ENCODE measurements at regions of chr5 and their contacts with region 1.

Region 1: GRCh38 chr5:40688127-40688761 is 8.5 kb downstream of the PTGER4 start:
- DNase-seq: peak; percentile 78 to 91 (median 81)
- ATAC-seq: peak; percentile 99
- H3K4me3 ChIP-seq: no peak overlapping the region
- H3K27ac ChIP-seq: no peak overlapping the region
- H3K4me1 ChIP-seq: no peaks in the 10 kb centered on the region
- H3K27me3 ChIP-seq: no peaks in the 10 kb centered on the region
- CTCF ChIP-seq: peak; percentile 86 to 96 (median 87)
- EP300 ChIP-seq: no peak
- POLR2A ChIP-seq: no peak
- RAD21 ChIP-seq: peak; percentile 94 to 97

Region 2: DNA sequence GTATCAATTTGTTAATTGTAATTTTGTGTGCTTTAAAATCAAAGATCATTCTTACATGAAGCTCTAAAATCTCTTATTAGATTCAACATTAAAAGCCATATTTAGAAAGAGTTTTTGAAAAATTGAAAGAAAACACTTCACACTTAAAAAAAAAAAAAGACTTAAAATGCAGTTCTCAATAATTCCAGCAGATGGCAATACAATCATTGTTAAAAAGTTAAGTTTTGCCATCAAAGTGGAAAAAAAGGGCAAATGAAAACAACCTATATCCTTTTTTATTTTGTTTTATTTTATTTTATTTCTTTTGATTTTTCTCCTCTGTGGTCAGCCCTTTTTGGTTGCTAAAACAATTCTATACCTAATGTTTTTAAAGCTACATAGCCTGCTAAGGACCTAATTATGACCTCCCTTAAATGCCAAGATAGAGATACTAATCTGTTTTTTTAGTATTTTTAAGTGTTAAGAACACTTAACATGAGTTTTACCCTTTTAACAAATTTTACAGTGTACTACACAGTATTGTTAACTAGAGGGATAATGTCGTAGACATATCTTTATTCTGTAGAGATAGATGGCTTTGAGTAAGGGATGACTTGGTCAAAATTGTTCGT is 1109.3 kb before region 1 on chr5:
- CTCF ChIA-PET with region 1: interaction called, 17 read pairs
- POLR2A ChIA-PET with region 1: no interaction called
- in situ Hi-C with region 1: no loop called
- intact Hi-C with region 1: loop called (anchors 1 kb)
- DNase-seq: peak in 1 of 4 experiments; percentile 25
- ATAC-seq: no peak
- H3K4me3 ChIP-seq: no peak overlapping the region
- H3K27ac ChIP-seq: no peak overlapping the region
- H3K4me1 ChIP-seq: no peaks in the 10 kb centered on the region
- H3K27me3 ChIP-seq: no peaks in the 10 kb centered on the region
- CTCF ChIP-seq: peak in 2 of 3 experiments; percentile 21 to 73; a peak in 3 of 6 replicates
- EP300 ChIP-seq: no peak
- POLR2A ChIP-seq: no peak
- RAD21 ChIP-seq: peak; percentile 73 to 75

Region 3: GRCh38 chr5:39599721-39600431 is 1088.4 kb before region 1 on chr5:
- CTCF ChIA-PET with region 1: no interaction called
- POLR2A ChIA-PET with region 1: no interaction called
- in situ Hi-C with region 1: no loop called
- intact Hi-C with region 1: loop called (anchors 5 kb)
- DNase-seq: peak in 3 of 4 experiments; percentile 18 to 52 (median 21)
- ATAC-seq: peak; percentile 76
- H3K4me3 ChIP-seq: no peak overlapping the region
- H3K27ac ChIP-seq: no peak overlapping the region
- H3K4me1 ChIP-seq: no peaks in the 10 kb centered on the region
- H3K27me3 ChIP-seq: no peaks in the 10 kb centered on the region
- CTCF ChIP-seq: peak; percentile 27 to 68 (median 36); a peak in 3 of 6 replicates
- EP300 ChIP-seq: no peak
- POLR2A ChIP-seq: no peak
- RAD21 ChIP-seq: peak; percentile 53 to 60

Region 4: DNA sequence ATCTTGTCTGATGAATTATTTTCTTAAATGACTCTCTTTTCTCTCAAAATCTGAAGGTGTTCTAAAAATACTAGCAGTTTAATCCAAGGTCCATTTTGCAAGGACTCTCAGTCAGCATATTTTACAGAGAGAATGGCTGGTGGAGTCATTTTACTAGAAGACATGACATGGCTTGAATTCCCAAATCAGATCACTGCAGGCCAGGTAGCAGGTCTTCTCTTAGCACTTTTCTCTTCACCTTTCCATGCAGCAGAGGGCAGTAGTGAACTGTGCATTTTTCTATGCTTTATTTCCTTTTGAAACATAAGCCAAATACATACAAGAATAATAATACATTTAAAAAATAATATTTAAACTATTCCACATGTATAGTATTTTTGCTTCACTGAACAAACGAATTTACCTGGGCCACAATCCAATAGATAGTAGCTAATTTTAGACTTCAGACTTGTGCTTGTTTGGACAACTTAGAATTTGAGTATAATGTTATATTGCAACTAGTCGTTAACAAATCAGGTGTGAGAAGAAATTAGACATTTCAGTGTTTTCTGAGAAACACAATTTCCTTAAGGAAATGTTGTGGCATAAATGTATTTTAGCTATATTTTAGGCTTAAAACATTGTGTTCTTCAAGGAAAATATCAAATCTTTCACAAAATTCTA is 974.1 kb before region 1 on chr5:
- CTCF ChIA-PET with region 1: interaction called, 12 read pairs
- POLR2A ChIA-PET with region 1: no interaction called
- in situ Hi-C with region 1: no loop called
- intact Hi-C with region 1: loop called (anchors 1 kb)
- DNase-seq: peak; percentile 24 to 64 (median 34)
- ATAC-seq: peak; percentile 72
- H3K4me3 ChIP-seq: no peak overlapping the region
- H3K27ac ChIP-seq: no peak overlapping the region
- H3K4me1 ChIP-seq: no peaks in the 10 kb centered on the region
- H3K27me3 ChIP-seq: no peaks in the 10 kb centered on the region
- CTCF ChIP-seq: peak; percentile 39 to 75 (median 51); a peak in 5 of 6 replicates
- EP300 ChIP-seq: no peak
- POLR2A ChIP-seq: no peak
- RAD21 ChIP-seq: peak; percentile 76 to 79

Region 5: DNA sequence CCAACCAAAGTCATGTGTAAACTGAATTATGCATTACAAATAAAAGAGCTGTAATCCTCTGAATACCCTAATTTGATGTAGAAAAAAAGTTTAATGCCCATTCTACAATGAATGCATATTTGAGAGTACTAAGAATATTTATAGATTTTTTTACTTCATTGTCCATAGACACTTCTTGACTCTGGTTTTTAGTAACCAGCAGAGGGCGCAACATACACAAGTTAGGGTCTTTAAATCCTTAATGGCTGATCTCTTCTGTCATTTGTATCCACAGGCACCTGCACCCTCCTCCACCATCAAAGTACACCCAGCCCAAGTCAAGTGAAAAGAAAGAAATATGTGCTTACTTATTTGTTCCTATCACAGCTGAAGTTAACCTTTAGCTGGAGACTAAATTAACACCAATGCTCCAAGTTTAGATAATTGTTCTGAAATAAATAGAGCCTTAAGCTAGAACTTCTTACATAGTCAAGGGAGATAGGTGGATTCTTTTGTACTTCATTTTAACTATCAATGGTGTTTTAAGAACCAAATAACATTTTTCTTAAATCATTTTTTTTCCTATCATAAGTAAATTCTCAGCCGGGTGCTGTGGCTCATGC is 739.3 kb before region 1 on chr5:
- CTCF ChIA-PET with region 1: no interaction called
- POLR2A ChIA-PET with region 1: no interaction called
- in situ Hi-C with region 1: loop called (anchors 25 kb)
- intact Hi-C with region 1: loop called (anchors 1 kb)
- DNase-seq: peak; percentile 42 to 70 (median 51)
- ATAC-seq: peak; percentile 85
- H3K4me3 ChIP-seq: no peak overlapping the region
- H3K27ac ChIP-seq: no peak overlapping the region
- H3K4me1 ChIP-seq: no peaks in the 10 kb centered on the region
- H3K27me3 ChIP-seq: no peaks in the 10 kb centered on the region
- CTCF ChIP-seq: peak; percentile 37 to 70 (median 53); a peak in 4 of 6 replicates
- EP300 ChIP-seq: no peak
- POLR2A ChIP-seq: no peak
- RAD21 ChIP-seq: peak; percentile 79 to 80

Region 6: DNA sequence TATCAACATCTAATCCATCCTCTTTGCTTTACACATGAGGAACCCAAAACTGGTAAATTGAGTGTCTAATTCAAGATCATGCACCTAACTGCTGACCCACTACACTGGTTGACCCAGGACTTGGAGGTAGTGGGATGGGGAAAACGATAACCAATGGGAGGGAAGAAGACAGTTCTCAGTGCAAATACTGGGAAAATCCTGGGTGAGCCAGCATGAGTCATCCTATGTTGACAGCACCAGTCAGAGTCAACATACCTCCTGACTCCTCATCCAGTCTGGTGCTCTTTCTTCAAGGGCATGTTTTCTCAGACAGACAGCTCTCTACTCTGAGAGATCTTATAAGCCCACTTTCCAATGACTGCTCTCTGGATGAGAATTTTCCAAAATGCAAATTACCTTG is 241.3 kb before region 1 on chr5:
- CTCF ChIA-PET with region 1: no interaction called
- POLR2A ChIA-PET with region 1: no interaction called
- in situ Hi-C with region 1: no loop called
- intact Hi-C with region 1: loop called (anchors 10 kb)
- DNase-seq: no peak
- ATAC-seq: no peak
- H3K4me3 ChIP-seq: no peak overlapping the region
- H3K27ac ChIP-seq: no peak overlapping the region
- H3K4me1 ChIP-seq: no peaks in the 10 kb centered on the region
- H3K27me3 ChIP-seq: no peaks in the 10 kb centered on the region
- CTCF ChIP-seq: no peak
- EP300 ChIP-seq: no peak
- POLR2A ChIP-seq: no peak
- RAD21 ChIP-seq: no peak

Region 7: DNA sequence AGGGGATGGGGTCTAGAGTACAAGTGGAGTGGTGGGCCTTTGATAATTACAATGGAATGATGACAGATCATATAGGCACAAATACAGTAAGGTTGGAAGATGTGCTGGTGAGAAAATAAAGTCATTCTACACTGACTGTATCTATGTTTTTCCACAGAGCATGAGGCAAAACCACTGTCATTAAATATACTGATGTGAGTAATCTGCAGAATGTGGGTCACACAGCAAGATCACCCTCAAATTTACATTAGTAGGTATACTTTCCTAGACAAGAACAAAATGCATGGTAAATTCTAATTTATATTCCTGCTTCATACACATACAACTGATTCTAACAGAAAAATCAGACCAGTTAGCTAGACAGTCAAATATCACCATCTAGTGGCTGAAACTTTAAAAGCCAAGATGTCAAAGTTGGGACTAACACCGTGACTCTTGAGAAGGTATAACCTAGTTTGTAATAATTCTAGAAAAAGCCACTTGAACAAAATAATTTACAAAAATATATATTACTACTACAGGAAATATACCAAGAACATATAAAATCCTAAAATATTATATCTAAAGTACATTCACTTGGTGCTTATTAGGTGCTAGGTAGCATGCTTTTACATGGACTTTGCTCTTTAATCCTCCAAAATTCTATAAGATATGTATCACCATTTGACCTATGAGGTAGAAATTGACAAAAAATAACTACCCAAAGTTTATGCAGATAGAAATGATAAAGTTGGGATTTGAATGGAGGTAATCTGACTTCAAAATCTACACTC is 48.0 kb after region 1 on chr5:
- CTCF ChIA-PET with region 1: interaction called, 3 read pairs
- POLR2A ChIA-PET with region 1: no interaction called
- in situ Hi-C with region 1: no loop called
- intact Hi-C with region 1: loop called (anchors 1 kb)
- DNase-seq: peak; percentile 55 to 73 (median 62)
- ATAC-seq: peak; percentile 92
- H3K4me3 ChIP-seq: no peak overlapping the region
- H3K27ac ChIP-seq: no peak overlapping the region
- H3K4me1 ChIP-seq: peaks cover 0 to 7% of the 10 kb centered on the region in 2 experiments; a peak in 2 of 5 replicates
- H3K27me3 ChIP-seq: no peaks in the 10 kb centered on the region
- CTCF ChIP-seq: peak; percentile 57 to 87 (median 65); a peak in 5 of 6 replicates
- EP300 ChIP-seq: no peak
- POLR2A ChIP-seq: no peak
- RAD21 ChIP-seq: peak; percentile 73 to 86

Measured in K562 (cell line).